Sciatic nerve (tissue), 2 donors: ENCODE measurements at regions of chr13 and their contacts with region 1.

Region 1: GRCh38 chr13:100674848-100675660 is 459 bp upstream of the TMTC4 start:
- DNase-seq: peak; percentile 100
- ATAC-seq: peak; percentile 99

Region 2: GRCh38 chr13:100646030-100646673 is 28.9 kb before region 1 on chr13:
- intact Hi-C with region 1: loop called (anchors 1 kb)
- DNase-seq: no peak
- ATAC-seq: no peak

Region 3: DNA sequence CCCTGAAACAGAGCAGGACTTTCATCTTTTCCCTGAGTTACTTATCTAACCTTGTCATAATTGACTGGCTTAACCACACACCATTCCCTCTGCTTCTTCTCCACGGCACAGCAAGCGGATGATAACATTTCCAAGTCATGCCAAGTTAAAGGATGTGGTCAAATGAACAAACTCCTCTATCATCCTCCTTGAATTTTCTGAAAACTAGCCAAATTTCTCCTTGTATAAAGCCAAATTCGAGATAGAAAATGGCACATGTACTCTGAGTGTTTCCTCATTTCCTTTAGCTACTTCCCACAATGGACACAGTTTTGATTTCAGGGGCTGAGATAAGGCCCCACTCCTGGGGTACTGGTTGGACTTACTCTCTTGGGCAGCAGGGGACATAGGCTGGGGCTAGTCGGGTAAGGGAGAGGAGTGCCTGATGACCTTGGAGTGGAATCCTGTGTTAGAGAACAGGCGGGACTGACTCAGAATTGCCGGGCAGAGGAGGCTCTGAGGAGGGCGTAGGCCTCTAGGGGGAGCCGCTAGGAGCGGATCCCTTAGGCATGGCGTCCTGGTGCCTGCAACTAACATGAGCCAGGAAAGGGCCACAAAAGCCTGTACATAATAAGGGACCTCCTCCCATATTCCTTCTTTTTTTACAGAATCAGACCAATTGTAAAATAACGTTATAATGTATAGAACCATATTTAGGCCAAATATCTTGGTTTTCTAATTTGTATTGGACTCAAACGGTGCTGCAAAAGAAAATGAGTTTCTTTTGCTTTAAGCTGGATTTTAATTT is 19.9 kb after region 1 on chr13:
- intact Hi-C with region 1: no loop called
- DNase-seq: no peak
- ATAC-seq: no peak